ENCODE measurements at regions of chr20 and their contacts with region 1.

Region 1: GRCh38 chr20:49936153-49937027 is at the start of gene RNF114:
- DNase-seq: peak; percentile 94
- H3K4me3 Mint-ChIP-seq: peak within 1 kb of the TSS; percentile 93
- H3K27ac Mint-ChIP-seq: peak within 1 kb of the TSS; percentile 71
- H3K4me1 Mint-ChIP-seq: peaks cover 37% of the 10 kb centered on the region
- H3K27me3 Mint-ChIP-seq: no peaks in the 10 kb centered on the region
- total RNA-seq, gene RNF114: 72.1 to 72.4 TPM

Region 2: GRCh38 chr20:49888345-49888966 is 47.9 kb before region 1 on chr20:
- CTCF ChIA-PET with region 1: no interaction called
- POLR2A ChIA-PET with region 1: no interaction called
- intact Hi-C with region 1: no loop called
- DNase-seq: peak; percentile 75
- H3K4me3 Mint-ChIP-seq: no peak overlapping the region
- H3K27ac Mint-ChIP-seq: no peak overlapping the region
- H3K4me1 Mint-ChIP-seq: peaks cover 20% of the 10 kb centered on the region
- H3K27me3 Mint-ChIP-seq: no peaks in the 10 kb centered on the region

Region 3: GRCh38 chr20:49915378-49916145 is 20.8 kb before region 1 on chr20 and contains the start of gene SPATA2:
- CTCF ChIA-PET with region 1: interaction called, 9 read pairs
- POLR2A ChIA-PET with region 1: interaction called, 10 read pairs
- intact Hi-C with region 1: no loop called
- DNase-seq: peak; percentile 94
- H3K4me3 Mint-ChIP-seq: peak within 1 kb of the TSS; percentile 98
- H3K27ac Mint-ChIP-seq: peak within 1 kb of the TSS; percentile 98
- H3K4me1 Mint-ChIP-seq: peaks cover 31% of the 10 kb centered on the region
- H3K27me3 Mint-ChIP-seq: no peaks in the 10 kb centered on the region
- total RNA-seq, gene SPATA2: 7.9 to 8.6 TPM

Region 4: DNA sequence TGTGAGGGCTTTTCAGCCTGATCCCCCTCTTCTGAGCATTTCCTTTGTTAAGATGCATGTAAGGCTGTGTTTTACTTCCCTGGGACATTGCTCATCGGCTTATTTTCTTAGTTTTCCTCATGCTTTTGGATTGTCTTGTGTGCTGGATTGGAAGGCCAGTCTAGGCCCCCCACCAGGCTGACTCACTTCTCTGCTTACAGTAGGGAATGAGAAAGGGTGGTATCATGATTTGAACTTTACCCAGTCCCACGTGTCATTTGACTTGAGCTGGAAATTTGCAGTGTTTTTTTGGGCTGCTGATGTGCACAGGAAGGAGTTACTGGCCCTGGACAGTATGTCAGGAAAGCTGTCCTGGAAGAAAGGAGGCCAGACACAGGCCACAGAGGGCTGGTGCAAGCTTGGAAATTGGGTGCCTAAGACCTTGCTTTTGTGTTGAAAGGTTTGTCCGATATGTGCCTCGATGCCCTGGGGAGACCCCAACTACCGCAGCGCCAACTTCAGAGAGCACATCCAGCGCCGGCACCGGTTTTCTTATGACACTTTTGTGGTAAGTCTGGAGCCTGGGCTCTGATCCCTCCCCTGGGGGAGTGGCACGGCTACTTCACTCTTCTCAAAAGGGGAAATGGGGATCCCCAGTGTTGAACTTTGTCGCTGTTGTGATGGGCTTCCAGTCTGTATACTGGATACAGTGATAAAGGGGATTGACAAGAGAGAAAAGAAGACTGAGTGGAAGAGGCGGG is 12.6 kb after region 1 on chr20:
- CTCF ChIA-PET with region 1: interaction called, 3 read pairs
- POLR2A ChIA-PET with region 1: interaction called, 12 read pairs
- intact Hi-C with region 1: no loop called
- DNase-seq: no peak
- H3K4me3 Mint-ChIP-seq: no peak overlapping the region
- H3K27ac Mint-ChIP-seq: no peak overlapping the region
- H3K4me1 Mint-ChIP-seq: peaks cover 20% of the 10 kb centered on the region
- H3K27me3 Mint-ChIP-seq: no peaks in the 10 kb centered on the region

Region 5: DNA sequence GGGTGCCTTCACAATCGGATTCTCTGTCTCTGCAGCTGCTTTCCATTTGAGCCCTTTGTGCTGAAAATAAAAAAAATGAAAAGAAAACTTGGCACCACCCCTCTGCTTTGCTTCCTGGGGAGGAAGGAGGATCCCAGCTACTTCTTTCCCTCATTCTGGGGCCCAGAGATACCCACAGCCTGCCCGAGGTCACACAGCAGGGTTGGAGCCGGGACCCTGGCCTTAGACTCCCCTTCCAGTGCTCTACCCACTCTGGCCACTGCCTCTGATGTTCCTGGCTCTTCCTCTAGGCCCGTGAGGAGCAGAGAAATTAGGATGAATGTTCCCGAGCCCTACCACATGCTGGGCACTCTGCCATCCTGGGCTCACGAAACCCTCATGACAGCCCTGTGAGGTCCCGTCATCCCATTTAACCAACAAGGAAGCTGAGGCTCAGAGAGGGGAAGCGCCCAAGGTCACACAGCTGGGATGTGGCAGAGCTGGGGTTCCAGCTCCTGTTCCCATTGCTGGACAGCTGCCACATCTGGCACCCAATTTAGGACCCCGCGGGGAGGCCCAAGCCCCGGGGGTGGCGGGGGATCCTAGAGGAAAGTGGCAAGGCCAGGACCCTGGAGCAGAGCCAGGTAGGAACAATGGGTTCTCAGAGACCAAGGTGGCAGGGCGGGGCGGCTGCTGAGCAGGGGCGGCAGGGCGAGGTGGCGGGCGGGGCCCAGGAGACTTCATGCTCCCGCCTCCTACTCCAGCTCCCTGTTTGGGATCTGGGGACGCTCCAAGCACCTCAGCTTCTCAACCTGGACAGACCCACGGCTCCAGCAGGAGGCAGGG is 330.9 kb after region 1 on chr20:
- CTCF ChIA-PET with region 1: no interaction called
- POLR2A ChIA-PET with region 1: no interaction called
- intact Hi-C with region 1: no loop called
- DNase-seq: no peak
- H3K4me3 Mint-ChIP-seq: no peak overlapping the region
- H3K27ac Mint-ChIP-seq: no peak overlapping the region
- H3K4me1 Mint-ChIP-seq: peaks cover 2% of the 10 kb centered on the region
- H3K27me3 Mint-ChIP-seq: peaks cover 14% of the 10 kb centered on the region

Measured in activated CD4-positive, alpha-beta memory T cell treated with anti-CD3 and anti-CD28 coated beads for 36 hours (primary cell).